ENCODE measurements at regions of chr6 and their contacts with region 1.

Region 1: DNA sequence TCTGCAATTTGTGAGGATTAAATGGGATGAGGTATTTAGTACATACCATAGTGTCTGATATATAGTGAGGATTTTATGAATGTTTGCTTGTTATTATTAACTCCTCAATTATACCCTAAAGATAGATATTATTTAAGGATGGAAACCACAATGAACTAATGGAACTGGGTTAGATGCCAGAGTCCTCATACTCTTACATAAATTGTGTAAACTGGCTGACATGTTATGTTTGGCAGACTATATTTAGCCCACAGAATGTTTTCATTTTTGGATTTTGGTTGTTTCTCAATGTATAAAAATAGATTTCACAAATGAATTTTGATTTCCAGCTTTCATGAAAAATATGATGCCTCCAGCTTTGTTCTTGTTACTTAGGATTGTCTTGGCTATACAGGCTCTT is 37.6 kb downstream of the HTR1B start:
- DNase-seq: no peak
- ATAC-seq: no peak
- H3K4me3 ChIP-seq: no peak overlapping the region
- H3K4me3 Mint-ChIP-seq: no peak overlapping the region
- H3K27ac ChIP-seq: no peak overlapping the region
- H3K27ac Mint-ChIP-seq: no peak overlapping the region
- H3K4me1 ChIP-seq: no peaks in the 10 kb centered on the region
- H3K4me1 Mint-ChIP-seq: no peaks in the 10 kb centered on the region
- H3K27me3 ChIP-seq: no peaks in the 10 kb centered on the region
- H3K27me3 Mint-ChIP-seq: no peaks in the 10 kb centered on the region
- CTCF ChIP-seq: no peak

Region 2: GRCh38 chr6:77089776-77090175 is 335.9 kb before region 1 on chr6:
- CTCF ChIA-PET with region 1: no interaction called
- POLR2A ChIA-PET with region 1: no interaction called
- intact Hi-C with region 1: no loop called
- DNase-seq: no peak
- ATAC-seq: no peak
- H3K4me3 ChIP-seq: no peak overlapping the region
- H3K4me3 Mint-ChIP-seq: no peak overlapping the region
- H3K27ac ChIP-seq: no peak overlapping the region
- H3K27ac Mint-ChIP-seq: no peak overlapping the region
- H3K4me1 ChIP-seq: no peaks in the 10 kb centered on the region
- H3K4me1 Mint-ChIP-seq: no peaks in the 10 kb centered on the region
- H3K27me3 ChIP-seq: no peaks in the 10 kb centered on the region
- H3K27me3 Mint-ChIP-seq: no peaks in the 10 kb centered on the region
- CTCF ChIP-seq: no peak

Region 3: DNA sequence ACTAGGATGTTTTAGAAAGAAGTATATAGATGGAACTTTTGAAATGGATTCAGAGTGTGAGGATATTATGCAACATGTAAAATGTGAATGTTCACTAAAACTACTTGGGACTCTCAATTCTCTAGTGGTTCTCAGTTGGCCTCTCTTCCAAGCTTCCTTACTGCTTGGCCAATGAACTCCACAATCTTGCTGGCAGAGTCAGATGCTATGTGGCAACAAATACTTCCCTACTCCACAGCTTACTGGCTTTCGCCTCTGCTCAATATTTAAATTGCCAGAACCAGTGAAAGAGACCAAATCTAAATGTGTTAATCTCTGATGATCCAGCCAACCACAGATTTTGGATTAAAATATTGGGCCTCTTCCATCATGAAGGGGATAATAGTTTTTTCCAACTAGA is 100.8 kb before region 1 on chr6:
- CTCF ChIA-PET with region 1: no interaction called
- POLR2A ChIA-PET with region 1: no interaction called
- intact Hi-C with region 1: no loop called
- DNase-seq: no peak
- ATAC-seq: no peak
- H3K4me3 ChIP-seq: no peak overlapping the region
- H3K4me3 Mint-ChIP-seq: no peak overlapping the region
- H3K27ac ChIP-seq: no peak overlapping the region
- H3K27ac Mint-ChIP-seq: no peak overlapping the region
- H3K4me1 ChIP-seq: no peaks in the 10 kb centered on the region
- H3K4me1 Mint-ChIP-seq: no peaks in the 10 kb centered on the region
- H3K27me3 ChIP-seq: no peaks in the 10 kb centered on the region
- H3K27me3 Mint-ChIP-seq: no peaks in the 10 kb centered on the region
- CTCF ChIP-seq: no peak

Region 4: GRCh38 chr6:77403424-77403823 is 22.2 kb before region 1 on chr6:
- CTCF ChIA-PET with region 1: no interaction called
- POLR2A ChIA-PET with region 1: no interaction called
- intact Hi-C with region 1: loop called (anchors 1 kb)
- DNase-seq: no peak
- ATAC-seq: no peak
- H3K4me3 ChIP-seq: no peak overlapping the region
- H3K4me3 Mint-ChIP-seq: no peak overlapping the region
- H3K27ac ChIP-seq: no peak overlapping the region
- H3K27ac Mint-ChIP-seq: no peak overlapping the region
- H3K4me1 ChIP-seq: no peaks in the 10 kb centered on the region
- H3K4me1 Mint-ChIP-seq: no peaks in the 10 kb centered on the region
- H3K27me3 ChIP-seq: no peaks in the 10 kb centered on the region
- H3K27me3 Mint-ChIP-seq: no peaks in the 10 kb centered on the region
- CTCF ChIP-seq: no peak

Measured in B cell (primary cell).